SK-N-SH (cell line): ENCODE measurements at regions of chr9 and their contacts with region 1.

Region 1: GRCh38 chr9:113275157-113276131 is at the starts of genes CDC26 and PRPF4:
- DNase-seq: peak; percentile 93
- H3K4me3 ChIP-seq: peak within 1 kb of the TSS; percentile 80 to 95
- H3K27ac ChIP-seq: peak within 1 kb of the TSS; percentile 90
- H3K4me1 ChIP-seq: peaks cover 7 to 12% of the 10 kb centered on the region in 2 experiments; a peak in 3 of 4 replicates
- H3K27me3 ChIP-seq: no peaks in the 10 kb centered on the region
- CTCF ChIP-seq: no peak
- EP300 ChIP-seq: no peak
- RAD21 ChIP-seq: no peak
- polyA plus RNA-seq, gene CDC26: 29.6 and 31.0 TPM in 2 replicates
- polyA plus RNA-seq, gene PRPF4: 22.5 and 23.2 TPM in 2 replicates

Region 2: GRCh38 chr9:113255438-113255837 is 20.0 kb before region 1 on chr9:
- CTCF ChIA-PET with region 1: interaction called, 16 read pairs
- POLR2A ChIA-PET with region 1: interaction called, 6 read pairs
- DNase-seq: no peak
- H3K4me3 ChIP-seq: no peak overlapping the region
- H3K27ac ChIP-seq: peak overlapping the region in 1 of 2 experiments; percentile 91; a peak in 2 of 4 replicates
- H3K4me1 ChIP-seq: peaks cover 0 to 15% of the 10 kb centered on the region in 2 experiments; a peak in 1 of 4 replicates
- H3K27me3 ChIP-seq: no peaks in the 10 kb centered on the region
- CTCF ChIP-seq: no peak
- EP300 ChIP-seq: no peak
- RAD21 ChIP-seq: no peak

Region 3: GRCh38 chr9:113340017-113340699 is 64.7 kb after region 1 on chr9 and contains the start of gene WDR31:
- CTCF ChIA-PET with region 1: interaction called, 12 read pairs
- POLR2A ChIA-PET with region 1: interaction called, 3 read pairs
- DNase-seq: peak; percentile 95
- H3K4me3 ChIP-seq: peak within 1 kb of the TSS; percentile 57 to 90
- H3K27ac ChIP-seq: peak within 1 kb of the TSS; percentile 69 to 74
- H3K4me1 ChIP-seq: peaks cover 0 to 19% of the 10 kb centered on the region in 2 experiments; a peak in 3 of 4 replicates
- H3K27me3 ChIP-seq: no peaks in the 10 kb centered on the region
- CTCF ChIP-seq: no peak
- EP300 ChIP-seq: peak; percentile 35 to 45; a peak in 2 of 4 replicates
- RAD21 ChIP-seq: no peak; the same call in 1 of the 2 replicates
- polyA plus RNA-seq, gene WDR31: 0.74 and 1.3 TPM in 2 replicates

Region 4: GRCh38 chr9:113356686-113357292 is 81.3 kb after region 1 on chr9:
- CTCF ChIA-PET with region 1: no interaction called
- POLR2A ChIA-PET with region 1: no interaction called
- DNase-seq: no peak
- H3K4me3 ChIP-seq: no peak overlapping the region
- H3K27ac ChIP-seq: no peak overlapping the region
- H3K4me1 ChIP-seq: peaks cover 0 to 6% of the 10 kb centered on the region in 2 experiments; a peak in 1 of 4 replicates
- H3K27me3 ChIP-seq: peaks cover 7% of the 10 kb centered on the region; the same call in 1 of the 2 replicates
- CTCF ChIP-seq: no peak
- EP300 ChIP-seq: no peak
- RAD21 ChIP-seq: no peak

Region 5: DNA sequence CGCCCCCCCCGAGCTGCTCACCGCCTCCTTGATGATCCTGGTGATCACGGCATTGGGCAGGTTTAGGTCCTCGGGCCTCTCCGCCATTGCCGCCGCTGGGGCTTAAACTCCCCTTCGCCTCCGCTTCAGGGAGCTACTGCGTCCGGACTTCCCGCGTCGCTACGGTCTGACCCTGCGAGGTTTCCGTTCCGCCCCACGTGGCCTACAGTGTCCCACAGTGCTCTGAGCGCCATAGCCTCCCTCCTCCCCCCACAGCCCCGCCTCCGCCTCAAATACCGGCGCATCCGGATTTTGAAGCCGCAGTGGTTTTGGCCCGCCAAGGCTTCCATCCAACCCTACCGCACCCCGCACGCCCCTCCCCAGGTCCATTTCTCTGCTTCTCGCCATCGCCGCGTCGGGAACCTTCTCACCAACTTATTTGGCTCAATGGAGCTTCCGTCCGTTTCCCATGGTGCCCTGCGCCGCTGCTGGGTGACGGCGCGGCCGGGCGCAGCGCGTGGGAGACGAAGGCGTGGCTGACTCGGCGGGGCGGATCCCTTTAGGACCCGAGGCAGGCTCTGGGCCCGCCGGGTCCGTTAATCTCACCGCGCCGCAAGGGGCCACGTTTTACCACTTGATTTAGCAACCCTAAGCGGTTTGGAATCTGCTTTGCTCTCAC is 134.9 kb after region 1 on chr9 and contains the starts of genes C9orf43 and POLE3:
- CTCF ChIA-PET with region 1: interaction called, 42 read pairs
- POLR2A ChIA-PET with region 1: interaction called, 19 read pairs
- DNase-seq: peak; percentile 94
- H3K4me3 ChIP-seq: peak within 1 kb of the TSS; percentile 81 to 88
- H3K27ac ChIP-seq: peak within 1 kb of the TSS; percentile 96
- H3K4me1 ChIP-seq: peaks cover 0 to 7% of the 10 kb centered on the region in 2 experiments; a peak in 1 of 4 replicates
- H3K27me3 ChIP-seq: no peaks in the 10 kb centered on the region
- CTCF ChIP-seq: 0 out of 2 replicates have a peak, but pooled peaks have one; percentile 12
- EP300 ChIP-seq: peak; percentile 7 to 24; a peak in 1 of 4 replicates
- RAD21 ChIP-seq: no peak
- polyA plus RNA-seq, gene C9orf43: 0.47 and 0.58 TPM in 2 replicates
- polyA plus RNA-seq, gene POLE3: 40.1 and 48.3 TPM in 2 replicates